Activated B cell treated with CpG ODN at 0.5 μM for 24 hours (primary cell): ENCODE measurements at regions of chr16 and their contacts with region 1.

Region 1: GRCh38 chr16:53266156-53266555 is 168.1 kb upstream of the RBL2 start:
- DNase-seq: no peak
- ATAC-seq: no peak
- H3K4me3 Mint-ChIP-seq: no peak overlapping the region
- H3K27ac Mint-ChIP-seq: no peak overlapping the region
- H3K4me1 Mint-ChIP-seq: no peaks in the 10 kb centered on the region
- H3K27me3 Mint-ChIP-seq: no peaks in the 10 kb centered on the region
- CTCF ChIP-seq: no peak

Region 2: DNA sequence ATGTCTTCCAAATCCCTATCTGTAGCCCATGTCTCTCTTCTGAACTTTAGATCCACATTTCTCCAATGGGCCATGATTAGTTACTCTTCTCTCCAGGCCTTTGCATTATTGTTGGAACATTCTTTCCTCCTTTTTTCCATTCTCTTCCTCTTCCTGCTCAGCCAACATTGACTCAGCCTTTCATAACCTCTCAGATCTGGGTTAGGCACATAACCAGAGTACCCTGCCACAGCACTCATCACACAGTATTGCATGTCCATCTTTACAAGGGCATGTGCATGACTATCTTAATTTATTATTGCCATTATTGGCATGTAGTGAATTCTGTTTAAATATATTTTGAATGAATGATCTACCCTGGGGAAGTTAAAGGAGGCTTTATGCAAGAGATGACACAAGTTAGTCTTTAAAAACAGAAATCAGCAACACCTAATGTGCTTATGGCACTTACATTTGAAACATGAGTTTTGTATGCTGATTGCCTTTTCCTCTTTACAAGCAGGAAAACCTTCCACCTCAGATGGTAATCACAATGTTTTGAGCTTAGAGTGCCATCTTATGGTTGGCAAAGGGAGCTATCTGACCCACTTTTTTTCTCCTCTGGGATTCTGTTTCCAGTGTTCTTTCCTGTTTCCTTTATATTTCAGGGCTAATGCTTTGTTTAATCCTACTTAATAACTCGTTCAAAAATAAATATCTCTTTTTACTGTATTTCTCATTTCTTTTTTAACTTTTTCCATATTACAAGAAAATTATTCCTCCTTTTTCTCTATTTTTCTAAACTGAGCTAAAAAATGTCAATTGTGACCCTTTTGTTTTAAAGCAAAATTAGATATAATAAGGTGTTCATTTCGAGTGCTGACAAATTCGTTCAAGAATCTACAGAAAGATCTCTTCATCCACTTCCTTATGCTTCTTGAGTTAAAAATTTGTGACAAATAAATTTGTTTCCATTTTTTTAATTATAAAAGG is 17.1 kb after region 1 on chr16:
- CTCF ChIA-PET with region 1: no interaction called
- POLR2A ChIA-PET with region 1: no interaction called
- intact Hi-C with region 1: loop called (anchors 2 kb)
- DNase-seq: no peak
- ATAC-seq: no peak
- H3K4me3 Mint-ChIP-seq: no peak overlapping the region
- H3K27ac Mint-ChIP-seq: no peak overlapping the region
- H3K4me1 Mint-ChIP-seq: no peaks in the 10 kb centered on the region
- H3K27me3 Mint-ChIP-seq: no peaks in the 10 kb centered on the region
- CTCF ChIP-seq: no peak